ENCODE measurements at regions of chr11 and their contacts with region 1.

Region 1: DNA sequence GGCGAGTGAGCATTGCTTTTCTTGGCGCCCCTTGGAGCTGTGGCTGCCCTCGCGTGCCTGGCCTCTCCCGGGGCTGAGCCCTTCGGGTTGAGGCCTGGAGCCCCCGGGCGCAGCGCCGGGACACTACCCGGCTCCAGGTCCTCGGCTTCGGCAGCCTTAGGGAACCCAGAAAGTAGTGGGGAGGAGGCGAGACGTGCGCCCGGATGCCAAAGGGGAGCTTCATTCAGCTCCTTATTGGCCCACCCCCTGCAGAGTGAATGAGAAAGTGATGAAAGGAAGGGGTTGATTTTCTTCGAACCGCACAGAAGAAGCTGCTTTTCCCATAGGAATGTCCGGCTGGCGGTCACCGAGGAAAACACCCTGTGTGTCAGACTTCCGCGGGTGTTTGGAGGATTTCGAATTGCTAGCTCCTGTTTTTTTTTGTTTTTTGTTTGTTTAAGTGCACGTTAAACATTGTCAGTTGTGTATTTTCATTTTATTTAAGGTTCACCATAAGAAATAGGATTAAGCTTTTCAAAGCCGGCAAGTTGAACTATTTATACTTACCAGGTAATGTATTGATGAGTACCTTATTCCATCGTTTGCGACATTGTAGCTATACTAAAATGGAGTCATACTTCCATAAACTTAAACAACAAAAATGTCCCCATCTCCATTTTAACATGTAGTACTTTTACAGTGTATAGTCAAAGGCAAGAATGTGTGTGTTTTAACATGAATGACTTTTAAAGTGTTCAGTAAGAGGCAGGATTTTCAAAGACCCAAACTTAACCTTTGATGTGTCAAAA is 841 bp upstream of the EIF4G2 start:
- DNase-seq: no peak
- ATAC-seq: peak; percentile 33

Region 2: DNA sequence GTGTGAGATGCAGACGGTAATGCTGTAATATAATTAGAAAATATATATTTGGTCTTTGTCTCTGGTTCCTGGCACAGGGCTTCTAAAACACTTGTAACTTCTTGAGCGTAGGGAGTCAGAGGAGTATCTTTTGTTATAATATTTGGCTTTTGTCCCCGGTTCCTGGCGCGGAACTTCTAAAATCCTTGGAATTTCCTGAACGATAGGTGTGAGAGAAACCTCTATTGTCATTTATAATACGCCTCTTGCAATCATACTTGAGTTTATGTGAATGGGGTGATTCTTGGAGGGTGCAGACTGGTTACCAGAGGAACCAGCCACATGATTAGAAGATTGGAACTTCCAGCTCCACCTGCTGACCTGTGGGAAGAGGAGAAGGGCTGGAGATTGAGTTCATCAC is 102.3 kb after region 1 on chr11:
- intact Hi-C with region 1: loop called (anchors 5 kb)
- DNase-seq: no peak
- ATAC-seq: peak; percentile 46